Activated naive CD4-positive, alpha-beta T cell treated with anti-CD3 and anti-CD28 coated beads for 36 hours (primary cell): ENCODE measurements at regions of chr5 and their contacts with region 1.

Region 1: DNA sequence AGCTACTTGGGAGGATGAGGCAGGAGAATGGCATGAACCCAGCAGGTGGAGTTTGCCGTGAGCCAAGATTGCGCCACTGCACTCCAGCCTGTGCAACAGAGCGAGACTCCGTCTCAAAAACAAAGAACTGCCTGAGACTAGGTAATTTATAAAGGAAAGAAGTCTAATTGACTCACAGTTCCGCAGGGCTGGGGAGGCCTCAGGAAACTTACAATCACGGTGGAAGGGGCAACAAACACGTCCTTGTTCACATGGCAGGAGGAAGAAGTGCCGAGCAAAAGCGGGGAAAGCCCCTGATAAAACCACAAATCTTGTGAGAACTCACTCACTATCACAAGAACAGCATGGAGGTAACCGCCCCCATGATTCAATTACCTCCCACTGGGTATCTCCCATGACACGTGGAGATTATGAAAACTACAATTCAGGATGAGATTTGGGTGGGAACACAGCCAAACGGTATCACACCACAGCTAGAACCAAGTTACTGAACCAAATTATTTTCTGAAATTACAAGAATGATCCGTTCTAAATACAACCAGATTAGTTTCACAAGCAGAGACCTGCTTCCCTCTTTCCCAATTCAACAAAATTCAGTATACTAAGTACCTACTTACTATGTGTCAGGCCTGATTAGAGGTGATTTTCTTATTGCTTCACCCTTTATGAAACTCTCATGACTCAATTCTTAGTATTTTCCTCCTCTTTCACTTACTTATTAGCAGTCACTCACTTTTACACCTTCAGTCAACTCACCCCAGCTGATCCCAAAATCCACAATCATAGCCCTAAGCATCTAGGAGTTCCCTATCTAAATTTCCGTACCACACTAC is 8.4 kb downstream of the UBTD2 start:
- DNase-seq: peak; percentile 88
- H3K4me3 Mint-ChIP-seq: no peak overlapping the region
- H3K27ac Mint-ChIP-seq: peak overlapping the region; percentile 73
- H3K4me1 Mint-ChIP-seq: peaks cover 34% of the 10 kb centered on the region
- H3K27me3 Mint-ChIP-seq: no peaks in the 10 kb centered on the region

Region 2: DNA sequence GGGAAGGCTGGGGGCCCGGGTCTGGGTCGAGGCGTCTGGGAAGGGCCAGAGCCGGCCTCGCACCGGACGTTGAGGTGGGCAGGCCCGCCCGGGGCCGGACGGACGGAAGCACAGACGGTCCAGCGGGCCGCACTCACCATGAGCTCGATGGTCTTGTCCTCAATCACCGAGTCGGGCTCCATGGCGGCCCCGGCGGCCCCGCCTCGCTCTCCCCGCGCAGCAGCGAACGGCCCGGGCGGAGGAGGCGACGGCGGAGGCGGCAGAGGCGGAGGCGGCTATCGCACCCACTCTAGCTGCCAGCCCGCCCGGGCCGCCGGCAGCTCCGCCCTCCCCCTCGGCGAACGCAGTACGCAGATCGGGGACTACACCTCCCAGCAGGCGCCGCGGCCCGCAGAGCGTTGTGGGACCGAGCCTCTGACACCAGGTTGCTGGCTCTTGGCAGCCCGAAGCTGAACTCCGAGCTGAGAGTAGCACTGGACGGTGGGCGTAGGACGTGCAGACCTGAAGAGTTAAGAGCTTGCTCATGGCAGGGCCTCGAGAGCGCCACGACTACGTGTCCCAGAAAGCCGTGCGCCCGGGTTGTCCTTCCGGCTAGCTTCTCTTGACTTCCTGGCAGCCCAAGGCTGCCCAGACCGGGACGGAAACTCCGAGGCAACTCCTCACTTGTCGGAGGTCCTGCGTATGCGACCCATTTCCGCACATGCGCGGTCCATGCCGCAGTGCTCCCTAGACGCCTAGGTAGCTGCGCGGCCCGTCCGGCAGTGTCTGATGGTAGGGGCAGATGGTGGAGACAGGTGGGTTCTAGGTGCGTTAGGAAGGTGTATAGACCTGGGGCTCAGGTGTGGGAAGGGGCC is 268.6 kb before region 1 on chr5 and contains the start of gene FBXW11:
- CTCF ChIA-PET with region 1: no interaction called
- intact Hi-C with region 1: loop called (anchors 2 kb)
- DNase-seq: peak; percentile 96
- H3K4me3 Mint-ChIP-seq: peak within 1 kb of the TSS; percentile 96
- H3K27ac Mint-ChIP-seq: peak within 1 kb of the TSS; percentile 99
- H3K4me1 Mint-ChIP-seq: peaks cover 46% of the 10 kb centered on the region
- H3K27me3 Mint-ChIP-seq: no peaks in the 10 kb centered on the region
- total RNA-seq, gene FBXW11: 32.8 to 35.5 TPM

Region 3: GRCh38 chr5:172173831-172174153 is 101.3 kb before region 1 on chr5:
- CTCF ChIA-PET with region 1: no interaction called
- intact Hi-C with region 1: loop called (anchors 1 kb)
- DNase-seq: peak; percentile 97
- H3K4me3 Mint-ChIP-seq: peak overlapping the region; percentile 89
- H3K27ac Mint-ChIP-seq: peak overlapping the region; percentile 94
- H3K4me1 Mint-ChIP-seq: peaks cover 90% of the 10 kb centered on the region
- H3K27me3 Mint-ChIP-seq: no peaks in the 10 kb centered on the region

Region 4: GRCh38 chr5:172223901-172224873 is 51.0 kb before region 1 on chr5:
- CTCF ChIA-PET with region 1: no interaction called
- intact Hi-C with region 1: loop called (anchors 1 kb)
- DNase-seq: peak; percentile 70
- H3K4me3 Mint-ChIP-seq: peak overlapping the region; percentile 11
- H3K27ac Mint-ChIP-seq: peak overlapping the region; percentile 37
- H3K4me1 Mint-ChIP-seq: peaks cover 30% of the 10 kb centered on the region
- H3K27me3 Mint-ChIP-seq: no peaks in the 10 kb centered on the region

Region 5: DNA sequence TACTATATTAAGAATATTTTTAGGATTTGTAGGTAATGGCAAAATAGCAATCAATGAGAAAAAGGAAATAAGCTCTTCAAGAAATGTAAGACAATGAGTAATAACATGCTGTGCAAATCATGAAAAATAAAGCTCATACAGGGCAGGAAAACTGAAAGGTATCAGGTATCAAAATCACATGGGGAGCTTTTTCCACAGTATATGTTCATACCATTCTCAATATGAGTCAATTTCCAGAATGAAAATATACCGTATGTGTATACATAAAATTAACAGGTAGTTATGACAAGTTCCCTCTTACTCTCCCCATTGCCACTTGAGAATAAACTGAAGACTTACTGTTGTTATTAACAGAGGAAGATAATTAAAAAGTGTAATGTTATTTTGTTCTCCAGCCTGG is 45.2 kb before region 1 on chr5:
- CTCF ChIA-PET with region 1: interaction called, 3 read pairs
- intact Hi-C with region 1: loop called (anchors 1 kb)
- DNase-seq: no peak
- H3K4me3 Mint-ChIP-seq: no peak overlapping the region
- H3K27ac Mint-ChIP-seq: no peak overlapping the region
- H3K4me1 Mint-ChIP-seq: peaks cover 27% of the 10 kb centered on the region
- H3K27me3 Mint-ChIP-seq: no peaks in the 10 kb centered on the region